ENCODE measurements at regions of chr7 and their contacts with region 1.

Region 1: GRCh38 chr7:40808378-40808942 is 673.7 kb downstream of the SUGCT start:
- DNase-seq: no peak
- ATAC-seq: no peak
- H3K4me3 ChIP-seq: no peak overlapping the region
- H3K27ac ChIP-seq: no peak overlapping the region
- H3K4me1 ChIP-seq: no peaks in the 10 kb centered on the region
- H3K27me3 ChIP-seq: no peaks in the 10 kb centered on the region
- CTCF ChIP-seq: no peak

Region 2: DNA sequence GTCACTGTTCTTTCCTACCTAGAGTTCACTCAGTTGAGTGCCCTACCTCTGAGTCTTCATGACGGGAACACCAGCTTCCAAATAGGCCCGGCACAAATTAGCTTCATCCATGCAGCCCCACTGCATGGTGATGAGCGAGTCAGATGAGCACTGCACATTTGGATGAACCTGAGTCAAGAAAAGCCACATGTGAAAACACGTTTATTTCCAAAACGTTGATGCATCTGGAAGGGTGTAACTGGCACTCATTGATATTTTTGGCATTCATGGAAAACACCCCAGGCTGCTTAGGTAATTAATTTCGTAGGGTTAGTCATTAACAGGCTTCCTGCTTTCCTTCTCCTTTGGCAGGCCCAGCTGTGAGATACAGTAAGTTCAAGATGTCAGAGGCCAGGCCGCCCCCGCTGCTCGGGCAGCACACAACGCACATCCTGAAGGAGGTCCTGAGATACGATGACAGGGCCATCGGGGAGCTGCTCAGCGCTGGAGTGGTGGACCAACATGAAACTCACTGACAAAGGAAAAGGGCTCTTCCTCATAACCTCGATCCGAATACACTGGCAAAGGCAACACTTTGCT is 51.6 kb after region 1 on chr7:
- intact Hi-C with region 1: loop called in 1 of 2 experiments (anchors 2 kb)
- DNase-seq: no peak
- ATAC-seq: no peak
- H3K4me3 ChIP-seq: no peak overlapping the region
- H3K27ac ChIP-seq: no peak overlapping the region
- H3K4me1 ChIP-seq: no peaks in the 10 kb centered on the region
- H3K27me3 ChIP-seq: no peaks in the 10 kb centered on the region
- CTCF ChIP-seq: no peak